Activated naive CD4-positive, alpha-beta T cell treated with anti-CD3 and anti-CD28 coated beads for 36 hours (primary cell): ENCODE measurements at regions of chr13 and their contacts with region 1.

Region 1: GRCh38 chr13:24020375-24020830 is 123.1 kb upstream of the C1QTNF9B start:
- DNase-seq: peak; percentile 67
- H3K4me3 Mint-ChIP-seq: no peak overlapping the region
- H3K27ac Mint-ChIP-seq: no peak overlapping the region
- H3K4me1 Mint-ChIP-seq: no peaks in the 10 kb centered on the region
- H3K27me3 Mint-ChIP-seq: no peaks in the 10 kb centered on the region

Region 2: DNA sequence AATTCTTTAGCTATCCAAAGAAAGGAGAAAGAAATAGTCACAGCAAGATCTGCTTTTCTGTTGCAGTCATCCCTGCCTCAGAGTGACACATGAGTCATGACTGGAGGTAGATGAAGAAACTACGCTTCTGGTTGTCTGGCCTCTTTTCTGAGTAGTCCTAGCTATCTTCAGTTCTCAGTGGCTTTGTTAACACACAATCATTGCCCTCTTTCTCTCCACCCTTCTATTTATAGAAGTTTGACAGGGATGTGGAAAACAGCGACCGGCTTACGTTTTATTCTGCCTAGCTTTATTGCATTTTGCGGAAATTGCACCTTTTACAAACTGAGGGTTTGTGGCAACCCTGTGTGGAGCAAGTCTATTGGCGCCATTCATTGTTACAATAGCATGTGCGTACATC is 166.8 kb after region 1 on chr13:
- CTCF ChIA-PET with region 1: no interaction called
- intact Hi-C with region 1: no loop called
- DNase-seq: peak; percentile 18
- H3K4me3 Mint-ChIP-seq: no peak overlapping the region
- H3K27ac Mint-ChIP-seq: no peak overlapping the region
- H3K4me1 Mint-ChIP-seq: peaks cover 21% of the 10 kb centered on the region
- H3K27me3 Mint-ChIP-seq: no peaks in the 10 kb centered on the region

Region 3: GRCh38 chr13:24220086-24220703 is 199.8 kb after region 1 on chr13:
- CTCF ChIA-PET with region 1: interaction called, 14 read pairs
- intact Hi-C with region 1: loop called (anchors 1 kb)
- DNase-seq: peak; percentile 72
- H3K4me3 Mint-ChIP-seq: no peak overlapping the region
- H3K27ac Mint-ChIP-seq: no peak overlapping the region
- H3K4me1 Mint-ChIP-seq: peaks cover 22% of the 10 kb centered on the region
- H3K27me3 Mint-ChIP-seq: no peaks in the 10 kb centered on the region

Region 4: DNA sequence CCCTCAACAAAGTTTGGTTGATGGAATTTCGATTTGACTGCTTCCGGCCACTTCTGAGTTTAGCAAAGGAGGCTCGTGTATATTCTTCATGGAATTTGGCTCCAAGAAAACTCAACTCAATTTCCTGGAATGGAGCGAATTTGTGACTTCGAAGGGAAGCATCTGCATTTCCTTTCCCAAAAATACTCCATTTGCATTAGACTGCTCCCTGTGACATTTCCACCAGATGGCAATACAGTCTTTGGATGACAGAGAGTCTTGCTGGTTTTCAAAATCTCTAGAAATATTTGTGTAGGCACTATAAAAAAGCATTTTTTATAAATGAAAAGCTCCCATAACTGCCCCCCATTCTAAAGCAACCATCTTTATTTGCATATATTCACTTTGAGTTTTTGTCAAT is 293.0 kb after region 1 on chr13:
- CTCF ChIA-PET with region 1: no interaction called
- intact Hi-C with region 1: no loop called
- DNase-seq: no peak
- H3K4me3 Mint-ChIP-seq: no peak overlapping the region
- H3K27ac Mint-ChIP-seq: no peak overlapping the region
- H3K4me1 Mint-ChIP-seq: no peaks in the 10 kb centered on the region
- H3K27me3 Mint-ChIP-seq: no peaks in the 10 kb centered on the region